CD8-positive, alpha-beta T cell (primary cell): ENCODE measurements at regions of chr12 and their contacts with region 1.

Region 1: GRCh38 chr12:121649819-121650353 is 19.6 kb downstream of the MORN3 start:
- DNase-seq: peak in 3 of 9 experiments; percentile 33 to 88 (median 78)
- ATAC-seq: peak; percentile 79
- H3K4me3 ChIP-seq: no peak overlapping the region
- H3K4me3 Mint-ChIP-seq: peak overlapping the region; percentile 9
- H3K27ac ChIP-seq: peak overlapping the region in 1 of 2 experiments; percentile 47
- H3K27ac Mint-ChIP-seq: peak overlapping the region; percentile 63
- H3K4me1 ChIP-seq: peaks cover 12% of the 10 kb centered on the region
- H3K4me1 Mint-ChIP-seq: peaks cover 33% of the 10 kb centered on the region
- H3K27me3 ChIP-seq: no peaks in the 10 kb centered on the region
- H3K27me3 Mint-ChIP-seq: no peaks in the 10 kb centered on the region
- CTCF ChIP-seq: no peak

Region 2: DNA sequence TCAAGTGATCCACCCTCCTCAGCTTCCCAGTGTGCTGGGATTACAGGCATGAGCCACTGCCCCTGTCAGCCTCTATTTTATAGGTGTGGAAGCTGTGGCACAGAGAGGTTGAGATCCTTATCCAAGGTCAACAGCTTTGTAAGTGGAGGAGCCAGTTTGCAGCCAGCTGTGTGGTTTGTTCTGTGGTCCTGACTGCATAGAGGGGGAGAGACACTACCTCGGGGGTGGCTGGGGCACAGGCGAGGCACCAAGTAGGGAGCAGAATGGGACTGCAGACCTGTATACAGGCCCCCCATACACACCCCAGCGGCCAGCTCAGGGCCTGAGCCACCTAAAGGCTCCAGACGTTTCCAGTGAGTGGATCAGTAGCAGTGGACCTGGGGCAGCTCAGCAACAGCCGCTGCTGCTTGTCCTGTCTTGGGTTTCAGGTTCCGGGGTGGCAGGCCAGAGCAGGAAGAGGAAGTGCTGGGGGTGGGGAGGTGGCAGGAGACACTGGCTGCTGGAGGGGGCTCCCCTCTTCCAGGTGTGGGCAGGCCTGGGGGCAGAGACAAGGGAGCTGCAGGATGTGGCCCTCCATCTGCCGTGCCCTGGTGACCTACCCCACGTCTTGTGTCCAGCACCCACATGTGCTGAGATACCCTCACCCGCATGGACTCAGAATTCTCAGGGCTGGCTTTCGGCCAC is 12.5 kb before region 1 on chr12:
- CTCF ChIA-PET with region 1: interaction called, 21 read pairs
- POLR2A ChIA-PET with region 1: interaction called, 5 read pairs
- intact Hi-C with region 1: no loop called
- DNase-seq: peak in 8 of 9 experiments; percentile 47 to 83 (median 66)
- ATAC-seq: peak; percentile 77
- H3K4me3 ChIP-seq: peak overlapping the region; percentile 27 to 53
- H3K4me3 Mint-ChIP-seq: peak overlapping the region; percentile 62
- H3K27ac ChIP-seq: peak overlapping the region; percentile 62 to 71
- H3K27ac Mint-ChIP-seq: peak overlapping the region; percentile 84
- H3K4me1 ChIP-seq: peaks cover 53% of the 10 kb centered on the region
- H3K4me1 Mint-ChIP-seq: peaks cover 63% of the 10 kb centered on the region
- H3K27me3 ChIP-seq: no peaks in the 10 kb centered on the region
- H3K27me3 Mint-ChIP-seq: no peaks in the 10 kb centered on the region
- CTCF ChIP-seq: no peak

Region 3: DNA sequence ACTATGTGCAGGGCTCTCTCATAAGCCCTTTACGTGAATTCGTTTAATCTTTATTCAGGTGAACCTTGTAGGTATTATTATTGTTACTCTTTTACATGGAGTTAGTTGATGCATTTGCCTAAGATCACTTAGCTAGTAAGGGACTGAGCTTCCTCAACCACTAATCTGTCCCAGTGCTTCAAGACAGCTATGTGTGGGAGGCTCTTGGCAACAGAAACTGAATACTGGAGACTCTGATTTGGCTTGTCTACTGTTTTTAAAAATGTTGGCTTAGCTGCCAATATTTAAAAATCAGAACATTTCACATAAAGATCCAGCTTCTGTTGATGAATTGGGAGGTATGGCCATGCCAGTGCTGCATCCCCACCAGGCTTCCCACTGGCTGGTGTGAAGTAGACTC is 884.0 kb after region 1 on chr12:
- CTCF ChIA-PET with region 1: no interaction called
- POLR2A ChIA-PET with region 1: no interaction called
- intact Hi-C with region 1: no loop called
- DNase-seq: no peak
- ATAC-seq: no peak
- H3K4me3 ChIP-seq: no peak overlapping the region
- H3K4me3 Mint-ChIP-seq: no peak overlapping the region
- H3K27ac ChIP-seq: no peak overlapping the region
- H3K27ac Mint-ChIP-seq: no peak overlapping the region
- H3K4me1 ChIP-seq: no peaks in the 10 kb centered on the region
- H3K4me1 Mint-ChIP-seq: no peaks in the 10 kb centered on the region
- H3K27me3 ChIP-seq: no peaks in the 10 kb centered on the region
- H3K27me3 Mint-ChIP-seq: no peaks in the 10 kb centered on the region
- CTCF ChIP-seq: no peak